CD4-positive, alpha-beta memory T cell (primary cell): ENCODE measurements at regions of chr16 and their contacts with region 1.

Region 1: DNA sequence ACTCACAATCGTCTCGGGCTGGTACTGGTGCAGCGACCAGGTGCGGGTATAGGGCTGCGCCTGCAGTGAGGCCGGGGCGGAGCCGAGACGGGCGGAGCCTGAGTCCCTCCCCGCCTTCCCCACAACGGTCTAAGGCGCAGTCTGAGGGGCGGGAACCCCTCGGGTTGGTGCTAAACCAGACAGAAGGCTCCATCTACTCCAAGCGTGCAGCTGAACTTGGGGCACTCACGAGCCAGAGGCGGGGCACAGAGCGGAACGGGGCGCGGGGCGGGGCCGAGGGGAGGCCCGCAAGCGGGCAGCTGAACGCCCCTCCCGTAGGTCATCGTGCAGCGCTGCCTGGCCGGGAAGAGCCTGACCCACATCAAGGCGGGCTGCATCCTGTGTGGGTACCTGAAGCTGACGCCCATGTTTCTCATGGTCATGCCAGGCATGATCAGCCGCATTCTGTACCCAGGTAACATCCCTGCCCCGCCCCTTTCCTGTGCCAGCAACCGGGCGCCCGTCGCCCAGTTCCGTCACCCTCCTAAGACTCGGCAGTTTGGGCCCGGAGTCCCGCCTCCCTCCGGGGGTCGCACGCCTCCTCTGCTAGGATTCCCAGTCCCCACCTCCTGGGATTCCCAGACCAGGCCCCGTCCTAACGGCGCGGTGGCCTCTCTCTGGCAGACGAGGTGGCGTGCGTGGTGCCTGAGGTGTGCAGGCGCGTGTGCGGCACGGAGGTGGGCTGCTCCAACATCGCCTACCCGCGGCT is 5.0 kb downstream of the SLC5A2 start:
- DNase-seq: peak; percentile 77 to 90 (median 80)
- H3K4me3 ChIP-seq: peak overlapping the region; percentile 61 to 77
- H3K4me3 Mint-ChIP-seq: peak overlapping the region; percentile 89 to 95 (median 92)
- H3K27ac ChIP-seq: peak overlapping the region; percentile 39
- H3K27ac Mint-ChIP-seq: peak overlapping the region; percentile 71 to 94 (median 92)
- H3K4me1 ChIP-seq: peaks cover 13% of the 10 kb centered on the region
- H3K4me1 Mint-ChIP-seq: peaks cover 2 to 33% (median 16%) of the 10 kb centered on the region in 4 donors
- H3K27me3 ChIP-seq: no peaks in the 10 kb centered on the region
- H3K27me3 Mint-ChIP-seq: no peaks in the 10 kb centered on the region

Region 2: GRCh38 chr16:31382485-31383161 is 105.3 kb before region 1 on chr16:
- CTCF ChIA-PET with region 1: no interaction called
- POLR2A ChIA-PET with region 1: no interaction called
- intact Hi-C with region 1: no loop called
- DNase-seq: peak in 4 of 5 donors; percentile 16 to 44 (median 42)
- H3K4me3 ChIP-seq: no peak overlapping the region
- H3K4me3 Mint-ChIP-seq: no peak overlapping the region
- H3K27ac ChIP-seq: no peak overlapping the region
- H3K27ac Mint-ChIP-seq: no peak overlapping the region
- H3K4me1 ChIP-seq: no peaks in the 10 kb centered on the region
- H3K4me1 Mint-ChIP-seq: peaks cover 0 to 10% (median 8%) of the 10 kb centered on the region in 4 donors
- H3K27me3 ChIP-seq: no peaks in the 10 kb centered on the region
- H3K27me3 Mint-ChIP-seq: peaks cover 6 to 13% of the 10 kb centered on the region in 2 donors

Region 3: GRCh38 chr16:31472709-31473203 is 15.1 kb before region 1 on chr16:
- CTCF ChIA-PET with region 1: interaction called, 4 read pairs
- POLR2A ChIA-PET with region 1: interaction called, 75 read pairs
- intact Hi-C with region 1: loop called (anchors 1 kb)
- DNase-seq: peak in 3 of 5 donors; percentile 21 to 27 (median 25)
- H3K4me3 ChIP-seq: peak overlapping the region in 1 of 2 donors; percentile 27
- H3K4me3 Mint-ChIP-seq: peak overlapping the region; percentile 56 to 90 (median 76)
- H3K27ac ChIP-seq: no peak overlapping the region
- H3K27ac Mint-ChIP-seq: peak overlapping the region in 1 of 7 donors; percentile 42
- H3K4me1 ChIP-seq: peaks cover 34% of the 10 kb centered on the region
- H3K4me1 Mint-ChIP-seq: peaks cover 10 to 32% (median 27%) of the 10 kb centered on the region in 4 donors
- H3K27me3 ChIP-seq: no peaks in the 10 kb centered on the region
- H3K27me3 Mint-ChIP-seq: peaks cover 0 to 13% of the 10 kb centered on the region in 2 donors